ENCODE measurements at regions of chr2 and their contacts with region 1.

Region 1: DNA sequence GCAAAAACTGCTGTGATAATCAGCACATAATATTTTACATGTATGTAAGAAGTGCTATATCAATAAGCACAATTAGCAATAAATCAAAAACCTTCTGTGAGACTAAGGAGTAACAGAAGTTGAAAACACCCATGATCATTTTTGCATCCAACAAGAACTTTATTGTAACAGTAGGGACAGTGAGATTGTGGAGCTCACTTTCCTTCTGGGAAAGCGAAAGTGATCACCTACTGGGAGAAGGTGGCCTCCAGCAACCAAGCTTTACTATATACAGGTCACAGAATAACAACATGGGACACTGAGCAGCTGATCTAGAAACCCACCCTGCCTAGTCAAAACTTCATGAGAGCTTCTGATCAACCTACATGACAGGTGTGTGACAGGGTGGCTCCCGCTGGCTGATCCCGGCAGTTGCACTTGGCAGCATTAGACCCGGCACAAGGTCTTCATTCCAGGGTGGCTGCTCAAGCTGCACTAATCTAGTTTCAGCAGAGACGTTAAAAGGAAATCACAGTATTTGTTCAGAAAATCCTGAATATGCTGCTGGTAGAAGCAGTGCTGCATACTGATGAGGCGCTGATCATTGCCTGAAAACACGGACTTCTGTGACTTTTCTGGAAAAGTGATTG is 63.5 kb upstream of the ARL5A start:
- DNase-seq: no peak
- H3K27ac ChIP-seq: no peak overlapping the region
- CTCF ChIP-seq: no peak

Region 2: GRCh38 chr2:151878655-151879563 is 12.8 kb before region 1 on chr2:
- CTCF ChIA-PET with region 1: interaction called, 10 read pairs
- POLR2A ChIA-PET with region 1: no interaction called
- DNase-seq: no peak
- H3K27ac ChIP-seq: no peak overlapping the region
- CTCF ChIP-seq: no peak